ENCODE measurements at regions of chr18 and their contacts with region 1.

Region 1: GRCh38 chr18:61975526-61976326 is 82.9 kb upstream of the RNF152 start:
- DNase-seq: peak; percentile 91
- H3K4me3 Mint-ChIP-seq: no peak overlapping the region
- H3K27ac Mint-ChIP-seq: peak overlapping the region; percentile 21
- H3K4me1 Mint-ChIP-seq: peaks cover 24% of the 10 kb centered on the region
- H3K27me3 Mint-ChIP-seq: no peaks in the 10 kb centered on the region

Region 2: DNA sequence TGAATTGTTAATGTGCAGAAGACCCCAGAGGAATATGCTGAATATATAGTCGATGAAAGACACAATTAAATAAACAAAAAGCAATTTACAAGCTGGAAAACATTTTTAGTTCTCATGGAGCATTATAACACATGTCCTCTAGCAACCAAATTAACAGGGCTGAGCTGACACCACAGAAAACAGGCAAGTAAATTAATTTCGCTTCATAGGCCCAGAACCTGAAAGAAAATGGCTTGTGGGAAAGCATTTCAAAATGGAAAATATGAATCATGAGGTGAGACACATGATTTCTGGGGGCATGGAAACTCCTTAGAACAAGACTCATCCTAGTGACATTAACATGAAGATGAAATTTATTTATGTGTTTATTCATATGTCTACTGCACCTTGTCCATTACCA is 57.9 kb before region 1 on chr18:
- intact Hi-C with region 1: loop called (anchors 5 kb)
- DNase-seq: no peak
- H3K4me3 Mint-ChIP-seq: peak overlapping the region; percentile 21
- H3K27ac Mint-ChIP-seq: peak overlapping the region; percentile 70
- H3K4me1 Mint-ChIP-seq: peaks cover 23% of the 10 kb centered on the region
- H3K27me3 Mint-ChIP-seq: peaks cover 11% of the 10 kb centered on the region

Region 3: GRCh38 chr18:61926532-61926931 is 49.2 kb before region 1 on chr18:
- intact Hi-C with region 1: loop called (anchors 1 kb)
- DNase-seq: peak; percentile 78
- H3K4me3 Mint-ChIP-seq: no peak overlapping the region
- H3K27ac Mint-ChIP-seq: peak overlapping the region; percentile 81
- H3K4me1 Mint-ChIP-seq: peaks cover 25% of the 10 kb centered on the region
- H3K27me3 Mint-ChIP-seq: peaks cover 4% of the 10 kb centered on the region

Region 4: DNA sequence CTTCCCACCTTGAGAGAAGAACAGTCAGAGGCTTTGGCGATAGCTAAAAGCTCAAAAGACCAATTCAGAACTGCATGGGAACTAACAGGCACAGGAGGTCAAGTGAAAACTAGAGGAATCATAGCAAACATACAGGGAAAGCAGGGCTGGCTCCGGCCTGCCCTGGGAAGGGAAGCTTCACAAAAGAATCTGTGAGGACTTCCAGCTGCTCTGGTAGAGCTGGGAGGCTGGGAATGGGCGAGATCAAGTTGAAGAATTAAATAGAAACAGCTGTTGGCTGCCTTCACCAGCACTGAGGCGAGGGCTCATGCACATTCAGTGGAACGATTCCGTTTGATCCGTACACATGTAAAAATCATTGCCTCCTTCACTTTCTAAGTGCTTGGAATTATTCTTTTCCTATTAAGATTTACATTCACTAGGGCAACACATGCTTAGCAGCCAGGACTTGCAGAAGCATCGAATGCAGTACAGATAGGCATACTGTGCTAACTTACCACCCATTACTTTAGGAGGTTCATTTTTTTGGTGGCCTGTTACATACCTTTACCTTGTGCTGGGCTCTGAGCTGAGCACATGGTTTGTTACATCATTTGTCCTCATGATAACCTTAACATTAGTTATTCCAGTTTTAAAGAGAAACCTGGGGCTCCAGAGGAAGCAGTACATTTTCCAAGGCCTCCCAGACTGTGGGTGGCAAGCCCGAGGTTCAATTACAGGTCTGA is 42.5 kb after region 1 on chr18:
- intact Hi-C with region 1: no loop called
- DNase-seq: no peak
- H3K4me3 Mint-ChIP-seq: no peak overlapping the region
- H3K27ac Mint-ChIP-seq: no peak overlapping the region
- H3K4me1 Mint-ChIP-seq: no peaks in the 10 kb centered on the region
- H3K27me3 Mint-ChIP-seq: peaks cover 8% of the 10 kb centered on the region

Region 5: DNA sequence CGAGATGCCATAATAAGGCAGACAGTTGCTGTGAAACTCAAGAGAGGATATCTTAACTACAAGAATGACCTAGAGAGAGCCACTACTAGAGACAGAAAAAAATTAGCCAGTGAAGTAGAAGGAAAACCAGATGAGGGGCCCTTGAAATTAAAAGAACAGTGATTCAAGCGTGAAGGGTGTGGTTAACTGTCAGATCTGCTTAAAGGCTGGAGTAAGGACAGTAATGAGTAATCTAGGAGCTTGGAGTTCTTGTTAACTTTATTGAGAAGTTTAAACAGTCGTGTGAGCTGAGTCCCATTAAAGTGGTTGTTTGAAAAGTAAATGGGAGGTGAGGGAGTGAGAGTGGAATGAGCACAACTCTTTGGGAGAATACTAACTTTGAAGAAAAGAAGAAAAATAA is 189.9 kb after region 1 on chr18:
- intact Hi-C with region 1: no loop called
- DNase-seq: no peak
- H3K4me3 Mint-ChIP-seq: no peak overlapping the region
- H3K27ac Mint-ChIP-seq: no peak overlapping the region
- H3K4me1 Mint-ChIP-seq: peaks cover 6% of the 10 kb centered on the region
- H3K27me3 Mint-ChIP-seq: no peaks in the 10 kb centered on the region

Measured in activated CD4-positive, alpha-beta T cell treated with anti-CD3 and anti-CD28 coated beads, Interleukin-2, amount 10 ng/mL, durations not matched to agents 24 days and 14 days (primary cell).